BJ (cell line): ENCODE measurements at regions of chr1 and their contacts with region 1.

Region 1: DNA sequence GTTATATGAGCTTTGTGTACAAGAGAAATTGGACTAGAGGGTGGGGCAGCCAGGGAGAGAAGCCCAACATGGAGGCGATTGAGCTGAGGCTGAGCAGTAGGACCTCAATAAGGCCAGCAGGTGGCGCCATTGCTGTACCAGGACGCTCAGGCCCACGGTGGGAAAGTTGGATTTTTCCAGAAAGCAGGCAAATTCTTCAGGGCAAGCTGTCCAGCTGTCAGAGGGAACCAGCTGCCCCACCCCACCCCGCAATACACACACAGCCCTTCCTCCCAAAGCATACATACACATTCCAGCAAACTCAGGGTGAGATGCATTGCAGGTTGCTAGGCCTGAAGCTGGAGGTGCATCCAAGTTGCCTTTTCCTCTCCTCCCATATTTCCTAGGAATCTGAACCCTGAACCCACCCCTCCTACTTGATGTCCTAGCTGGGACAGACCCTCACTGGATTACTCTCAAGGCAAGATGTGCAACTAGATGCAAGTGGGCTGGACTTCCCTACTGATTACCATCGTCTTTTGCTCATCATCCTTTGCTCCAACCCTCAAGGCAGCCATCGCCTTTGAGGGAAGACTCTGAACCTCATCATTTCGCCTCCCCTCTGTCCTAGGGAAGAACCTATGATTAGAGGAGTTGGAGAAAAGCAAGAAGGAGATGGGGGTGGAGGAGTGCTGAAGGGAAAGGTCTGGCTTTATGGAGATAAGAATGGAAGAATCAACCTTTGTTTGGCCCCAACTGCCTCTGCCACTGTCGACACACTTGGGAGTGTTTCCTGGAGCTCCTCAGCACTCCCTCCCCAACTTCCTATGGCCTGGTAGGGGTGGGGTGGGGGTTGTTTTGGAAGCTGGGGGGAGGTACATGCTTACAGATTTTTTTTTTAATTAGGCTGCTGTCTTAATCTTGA is 25.5 kb downstream of the CD34 start:
- DNase-seq: peak; percentile 39
- H3K4me3 ChIP-seq: no peak overlapping the region
- H3K27me3 ChIP-seq: no peaks in the 10 kb centered on the region; the same call in 1 of the 2 replicates
- CTCF ChIP-seq: peak; percentile 94

Region 2: DNA sequence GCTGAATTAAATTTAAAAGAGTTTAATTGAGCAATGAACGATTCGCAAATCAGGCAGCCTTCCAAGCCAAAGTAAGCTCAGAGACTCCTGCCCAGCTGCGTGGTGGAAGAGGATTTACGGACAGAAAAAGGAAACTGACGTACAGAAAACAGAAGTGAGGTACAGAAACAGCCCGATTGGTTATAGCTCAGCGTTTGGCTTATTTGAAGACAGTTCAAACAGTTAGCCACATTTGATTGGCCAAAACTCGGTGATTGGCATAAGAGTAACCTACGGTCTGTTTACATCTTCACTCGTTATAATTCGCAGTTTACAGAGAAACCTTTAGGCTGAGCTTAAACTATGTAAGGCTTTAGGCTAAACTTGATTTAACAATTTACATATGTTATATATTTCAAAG is 193.5 kb before region 1 on chr1:
- CTCF ChIA-PET with region 1: no interaction called
- POLR2A ChIA-PET with region 1: no interaction called
- DNase-seq: no peak
- H3K4me3 ChIP-seq: no peak overlapping the region
- H3K27me3 ChIP-seq: peaks cover 3% of the 10 kb centered on the region; the same call in 1 of the 2 replicates
- CTCF ChIP-seq: no peak

Region 3: DNA sequence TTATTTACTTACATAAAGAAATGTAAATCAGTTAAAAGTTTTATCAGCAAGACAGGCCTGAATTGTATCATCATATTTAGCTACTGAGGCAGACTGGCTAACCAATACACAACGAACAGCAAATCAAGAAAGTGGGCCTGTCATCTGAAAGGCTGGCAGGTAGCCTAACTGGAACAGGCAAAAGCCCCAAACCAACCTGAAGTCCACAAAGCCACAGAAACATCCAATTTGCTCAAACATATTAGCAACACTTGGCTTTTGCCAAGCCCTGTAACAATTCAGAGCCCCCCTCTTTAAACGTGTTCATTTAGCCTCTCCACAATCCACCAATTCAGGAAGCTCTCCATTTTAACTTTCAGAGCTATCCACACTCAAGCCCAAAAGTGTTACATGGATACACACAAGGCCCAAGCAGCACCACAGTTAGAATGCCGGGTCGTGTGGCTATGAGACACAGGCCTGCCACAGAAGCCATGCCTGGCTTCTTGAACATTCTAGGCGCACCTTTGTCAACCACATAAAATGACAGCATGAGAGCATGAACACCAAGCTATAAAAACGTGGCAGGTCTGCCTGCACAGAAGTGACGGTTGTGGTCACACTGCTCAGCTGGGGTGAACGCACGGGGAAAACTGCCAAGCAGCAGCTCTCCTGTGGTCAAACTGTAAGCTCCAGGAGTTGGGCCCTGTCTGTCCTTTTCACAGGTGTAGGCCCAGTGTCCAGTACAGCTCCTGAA is 23.8 kb before region 1 on chr1:
- CTCF ChIA-PET with region 1: interaction called, 192 read pairs
- POLR2A ChIA-PET with region 1: interaction called, 16 read pairs
- DNase-seq: no peak
- H3K4me3 ChIP-seq: no peak overlapping the region
- H3K27me3 ChIP-seq: no peaks in the 10 kb centered on the region
- CTCF ChIP-seq: no peak

Region 4: GRCh38 chr1:207897188-207897587 is 11.8 kb after region 1 on chr1:
- CTCF ChIA-PET with region 1: interaction called, 44 read pairs
- POLR2A ChIA-PET with region 1: no interaction called
- DNase-seq: no peak
- H3K4me3 ChIP-seq: no peak overlapping the region
- H3K27me3 ChIP-seq: no peaks in the 10 kb centered on the region
- CTCF ChIP-seq: peak; percentile 45

Region 5: DNA sequence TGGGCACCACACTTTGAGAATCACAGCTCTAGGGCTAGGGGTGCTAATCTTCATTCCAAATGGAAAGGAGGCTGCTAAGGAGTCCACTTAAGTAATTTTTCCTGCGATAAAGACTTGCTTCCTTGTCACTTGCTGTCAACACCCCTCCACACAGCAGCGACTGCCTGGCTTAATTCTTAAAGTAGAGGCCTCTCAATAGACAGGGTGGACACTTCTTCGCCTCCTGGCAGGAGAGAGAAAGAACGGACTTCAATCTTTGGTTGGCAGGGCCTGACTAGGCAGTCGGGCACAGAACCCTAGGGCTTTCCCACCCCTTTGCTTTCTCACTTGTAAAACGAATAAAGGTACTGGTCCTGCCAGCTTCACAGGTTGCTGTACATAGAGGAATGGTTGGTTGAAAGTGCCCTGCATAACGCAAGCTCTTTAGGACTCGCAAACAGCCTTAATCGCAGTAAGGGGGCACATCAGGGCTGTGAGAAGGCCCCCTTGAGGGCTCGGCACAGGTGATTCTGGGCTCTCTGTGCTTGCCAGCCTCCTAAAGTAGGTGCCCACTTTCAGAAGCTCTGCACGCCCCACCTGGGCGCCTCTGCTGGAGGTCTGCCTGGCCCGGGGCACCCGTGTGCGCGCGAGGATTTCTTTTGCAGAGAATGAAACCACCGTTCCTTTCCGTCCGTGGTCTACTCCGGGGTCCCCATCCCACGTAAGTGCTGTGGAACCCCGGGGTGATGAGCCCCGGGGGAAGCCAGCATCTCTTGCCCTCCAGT is 73.2 kb after region 1 on chr1:
- CTCF ChIA-PET with region 1: interaction called, 206 read pairs
- POLR2A ChIA-PET with region 1: interaction called, 9 read pairs
- DNase-seq: no peak
- H3K4me3 ChIP-seq: no peak overlapping the region
- H3K27me3 ChIP-seq: no peaks in the 10 kb centered on the region
- CTCF ChIP-seq: no peak

Region 6: DNA sequence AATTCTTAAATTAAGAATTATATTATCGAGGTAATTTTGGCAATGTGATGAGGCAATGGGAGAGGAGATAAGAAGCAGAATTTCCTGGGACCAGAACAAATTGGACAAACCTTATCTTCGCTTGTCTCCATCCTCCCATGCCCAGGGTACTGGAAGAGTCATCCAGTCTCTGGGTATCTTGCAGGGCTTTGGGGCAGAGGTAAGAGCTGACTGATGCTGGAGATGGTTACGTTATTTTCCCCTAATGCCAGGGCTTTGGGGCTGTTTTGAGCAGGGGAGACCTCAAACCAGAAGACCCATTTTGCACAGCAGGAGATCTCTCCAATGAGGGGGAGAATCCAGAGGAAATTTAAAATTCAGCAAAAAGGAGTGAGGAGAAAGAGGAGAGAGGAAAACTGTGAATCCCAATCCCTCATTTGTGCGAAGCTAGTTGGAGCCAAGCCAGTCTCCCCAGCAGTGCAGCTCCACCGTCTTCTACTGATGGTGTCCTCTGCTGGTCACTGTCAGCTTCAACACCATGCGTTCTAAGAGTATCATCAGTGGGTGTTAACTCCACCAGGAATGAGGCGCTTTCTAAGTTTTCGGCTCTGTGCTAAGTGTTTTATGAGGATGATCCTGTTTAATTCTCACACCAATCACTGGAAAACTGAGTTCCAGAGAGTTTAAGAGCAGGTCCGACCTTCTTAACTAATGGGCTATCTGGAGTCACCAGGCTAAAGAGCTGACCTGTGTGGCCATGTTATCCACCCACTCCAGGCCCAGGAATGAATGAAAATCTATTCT is 112.3 kb after region 1 on chr1:
- CTCF ChIA-PET with region 1: interaction called, 49 read pairs
- POLR2A ChIA-PET with region 1: no interaction called
- DNase-seq: no peak
- H3K4me3 ChIP-seq: no peak overlapping the region
- H3K27me3 ChIP-seq: peaks cover 7% of the 10 kb centered on the region
- CTCF ChIP-seq: peak; percentile 91